CD8-positive, alpha-beta T cell (primary cell): ENCODE measurements at regions of chr14 and their contacts with region 1.

Region 1: GRCh38 chr14:21103710-21104447 is 3.0 kb downstream of the TMEM253 start:
- DNase-seq: peak; percentile 87 to 96 (median 93)
- ATAC-seq: peak; percentile 85
- H3K4me3 ChIP-seq: peak overlapping the region; percentile 68 to 75
- H3K4me3 Mint-ChIP-seq: peak overlapping the region; percentile 91
- H3K27ac ChIP-seq: peak overlapping the region; percentile 94 to 99
- H3K27ac Mint-ChIP-seq: peak overlapping the region; percentile 95
- H3K4me1 ChIP-seq: peaks cover 20% of the 10 kb centered on the region
- H3K4me1 Mint-ChIP-seq: peaks cover 21% of the 10 kb centered on the region
- H3K27me3 ChIP-seq: no peaks in the 10 kb centered on the region
- H3K27me3 Mint-ChIP-seq: no peaks in the 10 kb centered on the region
- CTCF ChIP-seq: peak; percentile 73

Region 2: GRCh38 chr14:20682435-20683124 is 421.3 kb before region 1 on chr14:
- CTCF ChIA-PET with region 1: no interaction called
- POLR2A ChIA-PET with region 1: no interaction called
- intact Hi-C with region 1: loop called in 1 of 2 experiments (anchors 5 kb)
- DNase-seq: peak; percentile 63 to 94 (median 80)
- ATAC-seq: peak; percentile 65
- H3K4me3 ChIP-seq: peak overlapping the region; percentile 67 to 93
- H3K4me3 Mint-ChIP-seq: no peak overlapping the region
- H3K27ac ChIP-seq: peak overlapping the region; percentile 80 to 90
- H3K27ac Mint-ChIP-seq: no peak overlapping the region
- H3K4me1 ChIP-seq: peaks cover 24% of the 10 kb centered on the region
- H3K4me1 Mint-ChIP-seq: peaks cover 29% of the 10 kb centered on the region
- H3K27me3 ChIP-seq: no peaks in the 10 kb centered on the region
- H3K27me3 Mint-ChIP-seq: no peaks in the 10 kb centered on the region
- CTCF ChIP-seq: no peak

Region 3: DNA sequence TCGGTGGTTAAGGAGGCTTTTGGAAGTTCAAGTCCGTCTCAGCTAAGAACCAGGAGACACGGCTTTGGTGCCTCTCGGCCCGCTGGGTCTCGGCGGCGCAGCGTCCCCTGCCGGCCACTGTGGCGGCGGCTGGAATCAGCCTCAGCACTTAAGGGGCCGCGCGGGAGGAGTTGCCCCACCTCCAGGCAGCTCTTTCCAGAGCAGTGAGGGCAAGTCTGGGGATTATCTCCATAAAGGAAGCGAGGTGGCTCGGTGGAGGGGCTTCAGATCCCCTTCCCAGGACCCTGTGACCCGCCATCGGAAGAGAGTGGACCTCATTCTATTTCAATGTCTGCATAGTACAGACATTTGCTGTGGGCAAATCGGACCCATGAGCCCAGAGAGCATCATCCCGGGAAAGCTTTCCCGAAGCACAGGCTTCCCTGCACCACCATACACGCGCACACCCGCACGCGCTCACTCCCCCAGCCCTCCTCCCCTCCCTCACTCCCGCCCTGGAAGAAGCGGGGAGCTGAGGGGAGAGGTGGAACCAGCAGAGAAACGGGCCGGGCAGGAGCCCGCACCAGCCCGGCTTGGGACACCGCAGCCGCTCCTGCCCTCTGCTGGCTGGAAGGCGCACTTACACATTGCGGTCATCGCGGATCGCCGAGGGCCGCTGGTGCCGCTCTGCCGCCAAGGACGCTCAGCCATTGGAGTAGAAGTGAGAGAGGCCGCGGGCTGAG is 132.7 kb before region 1 on chr14:
- CTCF ChIA-PET with region 1: interaction called, 3 read pairs
- POLR2A ChIA-PET with region 1: no interaction called
- intact Hi-C with region 1: loop called in 1 of 2 experiments (anchors 5 kb)
- DNase-seq: peak; percentile 48 to 87 (median 75)
- ATAC-seq: peak; percentile 91
- H3K4me3 ChIP-seq: peak overlapping the region; percentile 80 to 85
- H3K4me3 Mint-ChIP-seq: peak overlapping the region; percentile 92
- H3K27ac ChIP-seq: no peak overlapping the region
- H3K27ac Mint-ChIP-seq: no peak overlapping the region
- H3K4me1 ChIP-seq: peaks cover 11% of the 10 kb centered on the region
- H3K4me1 Mint-ChIP-seq: peaks cover 10% of the 10 kb centered on the region
- H3K27me3 ChIP-seq: peaks cover 0 to 3% of the 10 kb centered on the region in 2 experiments
- H3K27me3 Mint-ChIP-seq: peaks cover 24% of the 10 kb centered on the region
- CTCF ChIP-seq: peak; percentile 92

Region 4: DNA sequence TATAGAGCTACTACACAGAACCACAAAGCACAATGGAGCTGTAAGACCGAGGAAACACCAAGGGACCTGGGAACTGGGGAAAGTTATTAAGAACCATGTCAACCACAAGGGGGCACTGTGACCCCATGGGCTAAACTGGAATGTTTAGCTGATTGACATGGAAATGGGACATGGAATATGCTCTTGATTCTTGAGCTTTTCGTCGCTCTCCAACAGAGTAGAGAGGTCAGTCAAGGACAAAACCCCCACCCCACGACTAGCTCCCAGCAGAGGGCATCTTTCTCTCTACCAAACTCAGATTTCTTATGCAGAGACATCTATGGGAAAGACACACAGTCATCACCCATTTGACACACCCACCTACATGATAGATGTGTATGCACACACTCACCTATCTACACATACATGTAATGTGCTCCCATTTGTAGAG is 89.1 kb before region 1 on chr14:
- CTCF ChIA-PET with region 1: interaction called, 336 read pairs
- POLR2A ChIA-PET with region 1: interaction called, 23 read pairs
- intact Hi-C with region 1: loop called (anchors 1 kb)
- DNase-seq: peak; percentile 61 to 90 (median 84)
- ATAC-seq: peak; percentile 78
- H3K4me3 ChIP-seq: no peak overlapping the region
- H3K4me3 Mint-ChIP-seq: no peak overlapping the region
- H3K27ac ChIP-seq: no peak overlapping the region
- H3K27ac Mint-ChIP-seq: no peak overlapping the region
- H3K4me1 ChIP-seq: no peaks in the 10 kb centered on the region
- H3K4me1 Mint-ChIP-seq: no peaks in the 10 kb centered on the region
- H3K27me3 ChIP-seq: peaks cover 0 to 4% of the 10 kb centered on the region in 2 experiments
- H3K27me3 Mint-ChIP-seq: peaks cover 13% of the 10 kb centered on the region
- CTCF ChIP-seq: peak; percentile 79

Region 5: DNA sequence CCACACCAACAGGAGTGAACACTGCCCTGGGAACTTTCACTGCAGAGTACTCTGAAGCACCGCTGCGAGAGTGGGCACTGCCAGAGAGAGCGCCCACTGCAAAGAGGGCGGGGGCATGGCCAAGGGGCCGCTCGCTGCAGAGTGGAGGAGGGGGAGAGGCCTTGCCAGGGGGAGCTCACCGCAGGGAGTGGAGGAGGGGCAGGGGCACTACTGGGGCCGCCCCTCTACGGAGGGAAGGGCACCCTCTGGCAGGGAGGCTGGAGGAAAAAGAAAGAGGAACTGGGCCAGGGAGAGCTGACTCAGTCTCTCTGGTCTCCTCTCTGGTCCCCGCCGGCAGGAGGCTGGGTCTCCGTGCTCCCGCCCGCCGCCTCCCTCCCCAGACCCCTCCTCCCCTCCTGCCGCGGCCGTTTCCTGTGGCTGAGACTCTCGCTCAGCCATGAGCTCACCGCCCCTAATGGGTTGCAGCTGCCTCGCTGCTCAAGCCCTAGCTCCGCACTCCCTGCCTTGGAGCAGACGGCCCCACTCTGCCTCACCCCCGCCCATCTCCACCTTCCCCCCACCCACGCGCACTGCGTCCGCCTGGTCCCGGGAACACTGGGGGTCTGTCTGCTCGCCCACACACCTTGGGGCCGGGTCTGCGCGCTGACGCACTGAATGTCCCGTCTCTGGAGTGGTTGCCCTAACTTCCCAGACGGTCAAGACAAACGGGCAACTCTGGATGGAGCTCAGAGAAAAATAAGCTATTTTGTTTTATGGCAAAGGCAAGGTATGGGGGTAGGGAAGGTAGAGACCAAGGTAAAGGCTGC is 32.5 kb before region 1 on chr14:
- CTCF ChIA-PET with region 1: interaction called, 185 read pairs
- POLR2A ChIA-PET with region 1: interaction called, 22 read pairs
- intact Hi-C with region 1: loop called (anchors 1 kb)
- DNase-seq: peak in 6 of 9 experiments; percentile 32 to 64 (median 52)
- ATAC-seq: peak; percentile 43
- H3K4me3 ChIP-seq: peak overlapping the region; percentile 47 to 59
- H3K4me3 Mint-ChIP-seq: peak overlapping the region; percentile 83
- H3K27ac ChIP-seq: no peak overlapping the region
- H3K27ac Mint-ChIP-seq: no peak overlapping the region
- H3K4me1 ChIP-seq: peaks cover 35% of the 10 kb centered on the region
- H3K4me1 Mint-ChIP-seq: peaks cover 34% of the 10 kb centered on the region
- H3K27me3 ChIP-seq: peaks cover 33 to 36% of the 10 kb centered on the region in 2 experiments
- H3K27me3 Mint-ChIP-seq: peaks cover 60% of the 10 kb centered on the region
- CTCF ChIP-seq: no peak

Region 6: DNA sequence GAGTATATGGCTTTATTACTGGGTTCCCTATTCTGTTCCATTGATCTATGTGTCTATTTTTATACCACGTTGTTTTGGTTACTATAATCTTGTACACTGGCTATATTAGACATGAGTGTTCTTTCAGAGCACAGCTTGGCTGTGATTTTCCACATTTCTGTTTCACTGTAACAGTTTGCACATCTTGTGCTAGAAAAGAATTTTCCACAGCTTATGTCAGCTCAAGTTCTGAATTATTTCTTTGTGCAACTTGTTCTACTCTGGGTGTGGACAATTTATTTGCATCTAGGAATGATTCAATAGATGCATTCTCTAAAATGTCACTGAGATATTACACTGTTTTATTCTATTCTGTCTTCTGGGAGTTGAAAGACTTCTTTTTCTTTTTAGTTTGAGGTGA is 80.4 kb after region 1 on chr14:
- CTCF ChIA-PET with region 1: no interaction called
- POLR2A ChIA-PET with region 1: no interaction called
- intact Hi-C with region 1: no loop called
- DNase-seq: no peak
- ATAC-seq: no peak
- H3K4me3 ChIP-seq: no peak overlapping the region
- H3K4me3 Mint-ChIP-seq: no peak overlapping the region
- H3K27ac ChIP-seq: no peak overlapping the region
- H3K27ac Mint-ChIP-seq: no peak overlapping the region
- H3K4me1 ChIP-seq: no peaks in the 10 kb centered on the region
- H3K4me1 Mint-ChIP-seq: no peaks in the 10 kb centered on the region
- H3K27me3 ChIP-seq: no peaks in the 10 kb centered on the region
- H3K27me3 Mint-ChIP-seq: peaks cover 7% of the 10 kb centered on the region
- CTCF ChIP-seq: no peak

Region 7: GRCh38 chr14:21269252-21270046 is 165.6 kb after region 1 on chr14 and contains the start of gene HNRNPC:
- CTCF ChIA-PET with region 1: no interaction called
- POLR2A ChIA-PET with region 1: no interaction called
- intact Hi-C with region 1: loop called (anchors 2 to 10 kb)
- DNase-seq: peak; percentile 100
- ATAC-seq: peak; percentile 85
- H3K4me3 ChIP-seq: peak within 1 kb of the TSS; percentile 68 to 89
- H3K4me3 Mint-ChIP-seq: peak within 1 kb of the TSS; percentile 99
- H3K27ac ChIP-seq: peak within 1 kb of the TSS; percentile 80 to 96
- H3K27ac Mint-ChIP-seq: peak within 1 kb of the TSS; percentile 100
- H3K4me1 ChIP-seq: peaks cover 28% of the 10 kb centered on the region
- H3K4me1 Mint-ChIP-seq: peaks cover 35% of the 10 kb centered on the region
- H3K27me3 ChIP-seq: no peaks in the 10 kb centered on the region
- H3K27me3 Mint-ChIP-seq: no peaks in the 10 kb centered on the region
- CTCF ChIP-seq: no peak
- total RNA-seq, gene HNRNPC: 621 to 624 TPM